Breast epithelium (tissue), 4 donors: ENCODE measurements at regions of chr12 and their contacts with region 1.

Region 1: DNA sequence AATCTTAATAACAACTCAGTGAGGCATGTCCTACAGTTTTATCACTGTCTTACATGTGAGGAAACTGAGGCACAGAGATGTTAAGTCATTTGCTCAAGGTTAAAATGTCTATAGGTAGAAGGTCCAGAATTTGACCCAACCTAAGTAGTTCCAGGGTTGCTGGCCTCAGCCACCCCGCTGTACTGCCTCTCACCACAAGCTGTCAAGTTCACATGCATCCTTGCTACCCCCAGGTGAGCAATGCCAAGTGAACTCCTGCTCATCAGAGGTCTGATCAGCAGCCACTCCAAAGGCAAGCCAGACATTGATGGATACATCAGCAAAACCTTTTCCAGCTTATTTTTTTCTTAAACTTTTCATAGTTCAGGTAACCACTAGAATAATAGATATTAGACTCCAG is 223.6 kb downstream of the RMST start:
- DNase-seq: no peak
- H3K4me3 ChIP-seq: no peak overlapping the region
- H3K27ac ChIP-seq: no peak overlapping the region
- H3K4me1 ChIP-seq: no peaks in the 10 kb centered on the region
- H3K27me3 ChIP-seq: no peaks in the 10 kb centered on the region
- CTCF ChIP-seq: no peak
- POLR2A ChIP-seq: no peak

Region 2: GRCh38 chr12:96979532-96979931 is 706.7 kb before region 1 on chr12:
- intact Hi-C with region 1: loop called (anchors 5 kb)
- DNase-seq: no peak
- H3K4me3 ChIP-seq: no peak overlapping the region
- H3K27ac ChIP-seq: no peak overlapping the region
- H3K4me1 ChIP-seq: no peaks in the 10 kb centered on the region
- H3K27me3 ChIP-seq: no peaks in the 10 kb centered on the region
- CTCF ChIP-seq: no peak
- POLR2A ChIP-seq: no peak

Region 3: GRCh38 chr12:97616946-97617345 is 69.2 kb before region 1 on chr12:
- intact Hi-C with region 1: no loop called
- DNase-seq: no peak
- H3K4me3 ChIP-seq: no peak overlapping the region
- H3K27ac ChIP-seq: no peak overlapping the region
- H3K4me1 ChIP-seq: no peaks in the 10 kb centered on the region
- H3K27me3 ChIP-seq: no peaks in the 10 kb centered on the region
- CTCF ChIP-seq: no peak
- POLR2A ChIP-seq: no peak